WTC11 (cell line): ENCODE measurements at regions of chr2 and their contacts with region 1.

Region 1: GRCh38 chr2:20225294-20226151 is 593 bp upstream of the SDC1 start:
- DNase-seq: peak; percentile 78
- ATAC-seq: peak; percentile 57
- H3K4me3 Mint-ChIP-seq: peak overlapping the region; percentile 67
- H3K27ac Mint-ChIP-seq: peak overlapping the region; percentile 95
- H3K4me1 Mint-ChIP-seq: peaks cover 32% of the 10 kb centered on the region
- H3K27me3 Mint-ChIP-seq: peaks cover 17% of the 10 kb centered on the region
- CTCF ChIP-seq: no peak

Region 2: DNA sequence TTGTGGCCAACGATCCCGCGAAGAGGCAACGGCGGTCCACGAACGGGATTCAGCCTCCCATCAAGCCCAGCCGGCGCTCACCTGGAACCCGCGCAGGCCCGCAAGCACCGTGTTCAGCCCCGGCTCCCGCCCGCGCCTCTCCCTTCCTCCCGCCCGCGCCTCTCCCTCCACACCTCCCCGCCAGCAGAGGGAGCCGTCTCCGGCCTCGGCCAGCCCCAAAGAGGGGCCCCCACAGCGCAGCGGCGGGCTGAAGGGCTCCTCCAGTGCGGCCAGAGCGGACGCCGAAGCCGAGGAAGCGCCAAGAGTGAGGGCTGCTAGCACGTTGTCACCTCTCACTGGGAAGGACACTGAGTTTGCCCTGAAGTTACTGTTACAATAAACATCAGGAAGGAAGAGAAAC is 118.8 kb before region 1 on chr2:
- CTCF ChIA-PET with region 1: interaction called, 38 read pairs
- POLR2A ChIA-PET with region 1: interaction called, 8 read pairs
- DNase-seq: peak; percentile 91
- ATAC-seq: peak; percentile 92
- H3K4me3 Mint-ChIP-seq: peak overlapping the region; percentile 64
- H3K27ac Mint-ChIP-seq: no peak overlapping the region
- H3K4me1 Mint-ChIP-seq: peaks cover 7% of the 10 kb centered on the region
- H3K27me3 Mint-ChIP-seq: peaks cover 43% of the 10 kb centered on the region
- CTCF ChIP-seq: peak; percentile 55

Region 3: GRCh38 chr2:20135631-20136050 is 89.9 kb before region 1 on chr2:
- CTCF ChIA-PET with region 1: interaction called, 59 read pairs
- POLR2A ChIA-PET with region 1: interaction called, 3 read pairs
- DNase-seq: peak; percentile 82
- ATAC-seq: peak; percentile 87
- H3K4me3 Mint-ChIP-seq: no peak overlapping the region
- H3K27ac Mint-ChIP-seq: no peak overlapping the region
- H3K4me1 Mint-ChIP-seq: peaks cover 37% of the 10 kb centered on the region
- H3K27me3 Mint-ChIP-seq: peaks cover 3% of the 10 kb centered on the region; the same call in 1 of the 2 replicates
- CTCF ChIP-seq: 0 out of 2 replicates have a peak, but pooled peaks have one; percentile 21

Region 4: GRCh38 chr2:20190876-20191713 is 34.4 kb before region 1 on chr2:
- CTCF ChIA-PET with region 1: interaction called, 11 read pairs
- POLR2A ChIA-PET with region 1: interaction called, 4 read pairs
- DNase-seq: no peak
- ATAC-seq: peak; percentile 46
- H3K4me3 Mint-ChIP-seq: no peak overlapping the region
- H3K27ac Mint-ChIP-seq: no peak overlapping the region
- H3K4me1 Mint-ChIP-seq: peaks cover 40% of the 10 kb centered on the region
- H3K27me3 Mint-ChIP-seq: no peaks in the 10 kb centered on the region
- CTCF ChIP-seq: no peak

Region 5: DNA sequence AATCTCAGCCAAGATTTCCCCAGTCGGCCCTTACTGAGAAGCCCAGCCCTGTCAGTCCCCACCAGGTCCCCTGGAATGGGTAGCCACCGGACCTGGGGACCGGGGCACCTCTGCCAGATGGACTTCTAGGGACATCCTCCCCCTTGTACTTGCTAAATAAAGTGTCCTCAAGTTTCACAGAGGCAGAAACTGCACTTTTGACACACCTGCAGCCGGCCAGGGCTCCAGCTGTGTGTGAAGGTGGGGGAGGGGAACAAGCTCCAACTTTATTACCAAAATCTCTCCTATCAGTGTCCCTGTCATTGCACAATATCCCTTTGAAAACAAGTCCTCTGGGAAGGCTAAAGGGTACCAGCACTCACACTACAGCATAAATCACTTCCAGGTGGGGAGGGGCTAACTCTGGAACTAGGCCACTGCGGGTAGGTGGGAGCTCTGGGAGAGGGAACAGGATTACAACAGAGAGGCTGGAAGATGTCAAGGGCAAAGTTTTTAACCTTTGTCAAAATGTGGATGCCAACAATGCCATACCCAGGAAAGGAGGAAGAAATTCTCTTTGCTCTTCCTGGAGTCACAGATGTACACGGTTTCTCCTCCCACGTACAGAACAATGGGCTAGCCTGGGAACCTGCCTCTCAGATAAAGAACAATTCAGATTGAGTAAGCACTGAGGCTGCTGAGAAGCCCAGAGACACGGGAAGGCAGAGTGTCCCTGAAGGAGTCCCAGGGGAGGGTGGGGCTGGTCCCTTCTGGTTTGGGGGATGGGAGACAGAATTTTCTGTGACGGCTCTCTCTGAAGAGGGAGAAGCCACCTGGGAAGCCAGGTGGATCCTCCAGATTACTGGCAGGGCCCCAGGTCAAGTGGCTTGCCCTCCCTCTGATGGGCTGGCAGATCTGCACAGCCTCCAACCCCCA is 11.6 kb before region 1 on chr2:
- CTCF ChIA-PET with region 1: interaction called, 14 read pairs
- POLR2A ChIA-PET with region 1: interaction called, 3 read pairs
- DNase-seq: no peak
- ATAC-seq: no peak
- H3K4me3 Mint-ChIP-seq: no peak overlapping the region
- H3K27ac Mint-ChIP-seq: peak overlapping the region; percentile 88; the same call in 1 of the 2 replicates
- H3K4me1 Mint-ChIP-seq: peaks cover 28% of the 10 kb centered on the region
- H3K27me3 Mint-ChIP-seq: no peaks in the 10 kb centered on the region
- CTCF ChIP-seq: no peak

Region 6: GRCh38 chr2:20242060-20243006 is 16.8 kb after region 1 on chr2:
- CTCF ChIA-PET with region 1: interaction called, 48 read pairs
- POLR2A ChIA-PET with region 1: interaction called, 4 read pairs
- DNase-seq: peak; percentile 74
- ATAC-seq: peak; percentile 73
- H3K4me3 Mint-ChIP-seq: peak overlapping the region; percentile 31
- H3K27ac Mint-ChIP-seq: no peak overlapping the region
- H3K4me1 Mint-ChIP-seq: peaks cover 14% of the 10 kb centered on the region
- H3K27me3 Mint-ChIP-seq: no peaks in the 10 kb centered on the region; the same call in 1 of the 2 replicates
- CTCF ChIP-seq: peak; percentile 93

Region 7: DNA sequence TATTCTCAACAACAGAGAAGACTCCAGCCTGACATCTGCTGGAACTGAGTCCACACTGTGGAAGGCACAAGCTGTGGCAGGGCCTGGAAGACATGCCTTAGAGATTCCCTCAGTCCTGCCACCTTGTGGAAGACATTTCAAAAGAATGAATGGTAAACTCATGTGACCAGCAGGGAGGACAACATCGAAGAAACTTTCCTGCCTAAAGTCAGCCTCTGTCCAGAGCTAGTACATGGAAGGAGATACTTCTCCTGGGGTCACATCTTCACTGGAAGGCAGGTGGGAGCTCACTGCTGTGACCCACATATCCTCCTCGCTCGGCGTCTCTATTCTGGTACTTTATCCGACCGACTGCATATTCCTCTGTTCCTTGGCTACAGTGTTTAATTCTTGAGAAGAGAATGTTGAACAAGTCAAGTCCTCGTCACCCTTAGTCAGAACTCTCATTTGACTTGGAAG is 65.6 kb after region 1 on chr2:
- CTCF ChIA-PET with region 1: interaction called, 21 read pairs
- POLR2A ChIA-PET with region 1: no interaction called
- DNase-seq: peak; percentile 62
- ATAC-seq: peak; percentile 99
- H3K4me3 Mint-ChIP-seq: no peak overlapping the region
- H3K27ac Mint-ChIP-seq: peak overlapping the region; percentile 88
- H3K4me1 Mint-ChIP-seq: peaks cover 7% of the 10 kb centered on the region
- H3K27me3 Mint-ChIP-seq: no peaks in the 10 kb centered on the region
- CTCF ChIP-seq: peak; percentile 28